Activated CD4-positive, alpha-beta T cell treated with anti-CD3 and anti-CD28 coated beads for 36 hours (primary cell): ENCODE measurements at regions of chr10 and their contacts with region 1.

Region 1: DNA sequence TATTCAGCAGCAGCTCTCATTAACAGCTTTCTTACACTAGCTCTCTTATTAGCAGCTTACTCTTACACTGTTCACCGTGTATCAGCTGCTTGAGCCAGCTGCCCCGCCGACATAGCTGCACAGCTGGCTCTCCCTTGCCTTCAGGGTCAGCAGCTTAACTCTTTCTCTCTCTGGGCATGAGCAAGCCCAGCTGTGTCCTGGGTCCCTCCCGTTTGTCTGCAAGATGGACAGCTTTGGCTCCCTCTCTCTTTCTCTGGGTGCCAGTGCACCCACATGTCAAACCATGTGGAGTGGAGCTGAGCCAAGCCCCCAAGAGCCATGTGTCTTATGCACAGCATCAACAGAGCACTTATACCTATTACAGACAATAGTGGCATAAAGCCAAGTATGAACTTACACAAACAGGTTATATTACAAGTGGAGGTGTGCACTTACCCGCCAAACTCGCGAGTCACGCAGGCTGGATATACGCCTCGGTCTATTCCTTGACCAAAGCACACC is 35.7 kb upstream of the MTPAP start:
- DNase-seq: peak; percentile 47
- ATAC-seq: peak; percentile 75
- H3K4me3 Mint-ChIP-seq: no peak overlapping the region
- H3K27ac Mint-ChIP-seq: no peak overlapping the region
- H3K4me1 Mint-ChIP-seq: no peaks in the 10 kb centered on the region
- H3K27me3 Mint-ChIP-seq: peaks cover 5% of the 10 kb centered on the region

Region 2: GRCh38 chr10:29998142-29998808 is 386.5 kb before region 1 on chr10:
- CTCF ChIA-PET with region 1: interaction called, 4 read pairs
- POLR2A ChIA-PET with region 1: no interaction called
- intact Hi-C with region 1: loop called in 1 of 2 experiments (anchors 2 kb)
- DNase-seq: peak; percentile 86
- ATAC-seq: peak; percentile 82
- H3K4me3 Mint-ChIP-seq: no peak overlapping the region
- H3K27ac Mint-ChIP-seq: no peak overlapping the region
- H3K4me1 Mint-ChIP-seq: peaks cover 9% of the 10 kb centered on the region
- H3K27me3 Mint-ChIP-seq: peaks cover 33% of the 10 kb centered on the region

Region 3: GRCh38 chr10:30359373-30360206 is 25.2 kb before region 1 on chr10:
- CTCF ChIA-PET with region 1: interaction called, 11 read pairs
- POLR2A ChIA-PET with region 1: no interaction called
- intact Hi-C with region 1: no loop called
- DNase-seq: peak; percentile 80
- ATAC-seq: peak; percentile 94
- H3K4me3 Mint-ChIP-seq: no peak overlapping the region
- H3K27ac Mint-ChIP-seq: no peak overlapping the region
- H3K4me1 Mint-ChIP-seq: peaks cover 3% of the 10 kb centered on the region
- H3K27me3 Mint-ChIP-seq: no peaks in the 10 kb centered on the region